PC-3 (cell line): ENCODE measurements at regions of chr4 and their contacts with region 1.

Region 1: GRCh38 chr4:71772592-71772991 is 11.3 kb downstream of the GC start:
- DNase-seq: peak; percentile 55
- ATAC-seq: no peak
- H3K4me3 ChIP-seq: no peak overlapping the region
- H3K27ac ChIP-seq: no peak overlapping the region
- H3K4me1 ChIP-seq: peaks cover 12% of the 10 kb centered on the region
- H3K27me3 ChIP-seq: peaks cover 27% of the 10 kb centered on the region; the same call in 1 of the 2 replicates
- CTCF ChIP-seq: peak; percentile 59

Region 2: DNA sequence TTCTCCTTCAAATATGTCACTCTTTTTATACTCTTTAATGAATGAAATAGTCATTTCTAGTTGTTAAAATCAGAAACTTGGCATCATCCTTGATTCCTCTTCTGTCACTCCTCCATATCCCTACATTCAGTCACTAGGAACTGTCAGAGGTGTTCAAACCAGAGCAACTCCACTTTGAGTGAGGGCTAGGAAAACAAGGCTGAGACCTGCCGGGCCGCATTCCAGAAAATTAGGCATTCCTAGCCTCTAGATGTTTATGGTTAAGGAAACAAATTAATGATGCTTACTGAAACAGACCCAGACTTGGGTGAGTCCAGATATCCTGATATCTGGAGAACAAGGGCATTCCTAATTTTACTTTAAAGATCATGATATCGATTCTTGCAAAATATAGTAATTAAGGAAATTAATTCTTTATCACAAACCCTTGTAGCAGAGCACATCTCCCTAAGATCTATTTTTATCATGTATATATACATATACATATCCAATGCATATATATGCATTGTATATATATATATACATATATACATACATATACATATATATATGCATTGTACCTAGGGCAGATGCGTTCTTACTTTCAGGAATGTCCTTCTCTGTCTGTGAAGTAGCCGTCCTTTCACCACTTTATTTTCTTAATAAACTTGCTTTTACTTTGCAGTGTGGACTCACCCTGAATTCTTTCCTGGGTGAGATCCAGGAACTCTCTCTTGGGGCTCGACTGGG is 109.7 kb after region 1 on chr4:
- CTCF ChIA-PET with region 1: no interaction called
- POLR2A ChIA-PET with region 1: no interaction called
- intact Hi-C with region 1: no loop called
- DNase-seq: peak; percentile 50
- ATAC-seq: no peak
- H3K4me3 ChIP-seq: no peak overlapping the region
- H3K27ac ChIP-seq: no peak overlapping the region
- H3K4me1 ChIP-seq: no peaks in the 10 kb centered on the region
- H3K27me3 ChIP-seq: peaks cover 18% of the 10 kb centered on the region
- CTCF ChIP-seq: no peak

Region 3: GRCh38 chr4:71941001-71941400 is 168.4 kb after region 1 on chr4:
- CTCF ChIA-PET with region 1: no interaction called
- POLR2A ChIA-PET with region 1: no interaction called
- intact Hi-C with region 1: loop called (anchors 5 kb)
- DNase-seq: peak; percentile 64
- ATAC-seq: peak; percentile 38; the same call in 1 of the 2 replicates
- H3K4me3 ChIP-seq: no peak overlapping the region
- H3K27ac ChIP-seq: no peak overlapping the region
- H3K4me1 ChIP-seq: 0 out of 2 replicates have a peak, but pooled peaks cover 5% of the 10 kb centered on the region
- H3K27me3 ChIP-seq: no peaks in the 10 kb centered on the region
- CTCF ChIP-seq: peak; percentile 85